Mammary epithelial cell (primary cell): ENCODE measurements at regions of chr4 and their contacts with region 1.

Region 1: GRCh38 chr4:85741921-85742591 is 267.1 kb downstream of the ARHGAP24 start:
- DNase-seq: no peak
- H3K4me3 ChIP-seq: no peak overlapping the region
- H3K27ac ChIP-seq: no peak overlapping the region
- H3K4me1 ChIP-seq: peaks cover 13% of the 10 kb centered on the region
- H3K27me3 ChIP-seq: no peaks in the 10 kb centered on the region
- CTCF ChIP-seq: no peak

Region 2: DNA sequence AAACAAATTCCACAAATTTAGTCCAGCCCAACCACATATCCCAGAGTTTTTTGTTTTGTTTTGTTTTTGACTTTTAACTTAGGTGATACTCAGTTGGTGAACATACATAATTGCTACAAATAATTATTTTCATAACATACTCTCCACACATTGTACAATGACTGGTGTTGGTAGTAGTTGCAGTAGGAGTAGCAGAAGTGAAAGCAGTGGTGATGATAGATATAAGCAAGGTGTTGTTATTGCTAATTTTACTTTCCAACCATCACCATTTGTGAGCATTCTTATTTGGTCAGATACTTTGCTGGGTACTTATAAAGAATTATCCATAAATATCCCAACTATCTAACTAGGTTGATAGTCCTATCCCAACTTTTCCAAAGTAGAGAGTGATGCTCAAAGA is 219.8 kb before region 1 on chr4:
- CTCF ChIA-PET with region 1: no interaction called
- dilution Hi-C with region 1: no loop called
- in situ Hi-C with region 1: no loop called
- intact Hi-C with region 1: no loop called
- DNase-seq: no peak
- H3K4me3 ChIP-seq: no peak overlapping the region
- H3K27ac ChIP-seq: no peak overlapping the region
- H3K4me1 ChIP-seq: no peaks in the 10 kb centered on the region
- H3K27me3 ChIP-seq: no peaks in the 10 kb centered on the region
- CTCF ChIP-seq: no peak

Region 3: GRCh38 chr4:85578076-85578475 is 164.0 kb before region 1 on chr4:
- CTCF ChIA-PET with region 1: no interaction called
- dilution Hi-C with region 1: no loop called
- in situ Hi-C with region 1: no loop called
- intact Hi-C with region 1: no loop called
- DNase-seq: no peak
- H3K4me3 ChIP-seq: no peak overlapping the region
- H3K27ac ChIP-seq: no peak overlapping the region
- H3K4me1 ChIP-seq: no peaks in the 10 kb centered on the region
- H3K27me3 ChIP-seq: no peaks in the 10 kb centered on the region
- CTCF ChIP-seq: no peak

Region 4: GRCh38 chr4:85658766-85659439 is 83.2 kb before region 1 on chr4:
- CTCF ChIA-PET with region 1: no interaction called
- dilution Hi-C with region 1: loop called (anchors 5 kb)
- in situ Hi-C with region 1: no loop called
- intact Hi-C with region 1: no loop called
- DNase-seq: no peak
- H3K4me3 ChIP-seq: no peak overlapping the region
- H3K27ac ChIP-seq: no peak overlapping the region
- H3K4me1 ChIP-seq: no peaks in the 10 kb centered on the region
- H3K27me3 ChIP-seq: no peaks in the 10 kb centered on the region
- CTCF ChIP-seq: peak in 1 of 2 donors; percentile 17